IMR-90 (cell line): ENCODE measurements at regions of chr4 and their contacts with region 1.

Region 1: GRCh38 chr4:157045507-157046127 is 30.3 kb upstream of the GLRB start:
- DNase-seq: peak; percentile 80
- ATAC-seq: peak; percentile 96
- H3K4me3 ChIP-seq: no peak overlapping the region
- H3K27ac ChIP-seq: no peak overlapping the region
- H3K4me1 ChIP-seq: 0 out of 2 replicates have a peak, but pooled peaks cover 3% of the 10 kb centered on the region
- H3K27me3 ChIP-seq: no peaks in the 10 kb centered on the region
- CTCF ChIP-seq: peak; percentile 90
- POLR2A ChIP-seq: no peak
- RAD21 ChIP-seq: peak; percentile 94

Region 2: DNA sequence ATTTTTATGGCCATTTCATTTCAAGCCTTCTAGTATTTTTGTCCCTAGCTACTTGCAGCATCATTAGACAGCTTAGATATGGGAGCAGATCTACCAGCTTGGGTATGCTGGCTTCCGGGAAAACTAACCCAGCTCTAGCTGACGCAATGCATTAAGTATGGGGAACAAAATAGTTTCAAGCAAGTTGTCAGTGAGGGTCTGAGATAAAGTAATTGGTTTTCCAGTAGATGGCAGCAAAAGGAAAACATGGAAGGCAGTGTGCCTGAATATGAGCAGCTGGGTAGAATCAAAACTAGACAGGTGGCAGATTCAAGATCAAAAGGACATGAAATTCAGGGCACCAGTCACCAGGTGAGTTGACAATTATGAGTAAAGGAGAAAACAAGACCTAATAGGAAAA is 751.0 kb before region 1 on chr4:
- CTCF ChIA-PET with region 1: no interaction called
- POLR2A ChIA-PET with region 1: no interaction called
- dilution Hi-C with region 1: no loop called
- in situ Hi-C with region 1: no loop called
- intact Hi-C with region 1: loop called (anchors 10 kb)
- DNase-seq: peak; percentile 87
- ATAC-seq: peak; percentile 70
- H3K4me3 ChIP-seq: no peak overlapping the region
- H3K27ac ChIP-seq: no peak overlapping the region
- H3K4me1 ChIP-seq: peaks cover 4% of the 10 kb centered on the region; the same call in 1 of the 2 replicates
- H3K27me3 ChIP-seq: no peaks in the 10 kb centered on the region
- CTCF ChIP-seq: peak; percentile 63
- POLR2A ChIP-seq: no peak
- RAD21 ChIP-seq: peak; percentile 63

Region 3: GRCh38 chr4:156594624-156595023 is 451.0 kb before region 1 on chr4:
- CTCF ChIA-PET with region 1: no interaction called
- POLR2A ChIA-PET with region 1: no interaction called
- dilution Hi-C with region 1: no loop called
- in situ Hi-C with region 1: no loop called
- intact Hi-C with region 1: loop called (anchors 2 kb)
- DNase-seq: no peak
- ATAC-seq: no peak
- H3K4me3 ChIP-seq: no peak overlapping the region
- H3K27ac ChIP-seq: no peak overlapping the region
- H3K4me1 ChIP-seq: peaks cover 3% of the 10 kb centered on the region; the same call in 1 of the 2 replicates
- H3K27me3 ChIP-seq: no peaks in the 10 kb centered on the region
- CTCF ChIP-seq: no peak
- POLR2A ChIP-seq: no peak
- RAD21 ChIP-seq: no peak

Region 4: DNA sequence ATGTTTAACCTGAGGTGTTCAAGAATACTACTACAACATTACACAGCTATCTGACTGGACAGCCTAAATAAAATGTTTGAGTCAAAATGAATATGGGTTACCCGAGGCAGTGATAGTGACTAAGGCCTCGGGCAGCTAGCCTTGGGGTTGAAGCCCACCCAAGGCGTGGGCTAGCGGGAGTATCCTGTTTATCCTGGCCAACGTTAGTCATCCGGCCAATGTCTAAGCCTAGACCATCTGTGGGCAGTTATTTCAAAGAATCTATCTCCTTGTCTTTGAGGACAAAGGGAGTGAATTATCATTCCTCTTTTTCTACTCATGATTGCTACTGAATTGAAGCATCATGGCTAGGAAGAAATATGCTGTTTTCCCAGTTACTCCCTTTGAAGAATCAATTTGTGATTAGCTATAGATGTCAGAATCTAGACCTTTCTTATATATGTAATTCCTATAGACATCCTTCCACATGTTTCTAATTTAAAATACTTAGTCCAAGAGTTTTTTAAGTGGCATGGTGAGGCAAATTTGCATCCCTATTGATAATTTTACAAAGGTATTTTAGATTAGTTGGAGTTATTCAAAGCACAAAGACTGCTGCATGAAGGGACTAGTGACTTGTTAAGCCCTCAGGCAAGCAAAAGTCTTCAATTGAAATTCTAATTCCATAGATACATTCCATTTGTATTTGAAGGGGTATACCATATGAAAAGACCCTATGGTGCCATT is 68.0 kb before region 1 on chr4:
- CTCF ChIA-PET with region 1: interaction called, 11 read pairs
- POLR2A ChIA-PET with region 1: no interaction called
- dilution Hi-C with region 1: no loop called
- in situ Hi-C with region 1: loop called (anchors 5 kb)
- intact Hi-C with region 1: no loop called
- DNase-seq: peak; percentile 97
- ATAC-seq: peak; percentile 81
- H3K4me3 ChIP-seq: no peak overlapping the region
- H3K27ac ChIP-seq: no peak overlapping the region
- H3K4me1 ChIP-seq: peaks cover 11% of the 10 kb centered on the region; the same call in 1 of the 2 replicates
- H3K27me3 ChIP-seq: no peaks in the 10 kb centered on the region
- CTCF ChIP-seq: no peak
- POLR2A ChIP-seq: no peak
- RAD21 ChIP-seq: no peak

Region 5: DNA sequence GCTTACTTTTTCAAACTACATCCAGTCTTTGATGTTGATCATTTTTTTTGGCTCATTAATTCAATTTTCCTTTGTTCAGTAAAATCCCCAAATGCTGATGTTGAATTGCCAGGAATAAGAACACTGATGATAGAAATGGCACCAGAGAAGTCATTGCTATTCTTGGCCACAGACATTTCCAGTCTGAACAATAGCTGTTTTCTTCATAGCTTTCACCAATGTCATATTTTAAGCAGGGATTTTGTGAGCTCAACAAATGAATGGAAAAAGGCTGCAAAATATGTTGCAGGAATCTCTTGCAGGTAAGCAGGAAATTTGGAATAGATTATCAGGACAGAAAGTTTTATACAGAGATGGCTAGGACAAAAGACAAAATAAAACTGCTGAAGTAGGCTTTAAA is 10.1 kb before region 1 on chr4:
- CTCF ChIA-PET with region 1: interaction called, 10 read pairs
- POLR2A ChIA-PET with region 1: interaction called, 17 read pairs
- dilution Hi-C with region 1: no loop called
- in situ Hi-C with region 1: no loop called
- intact Hi-C with region 1: no loop called
- DNase-seq: no peak
- ATAC-seq: no peak
- H3K4me3 ChIP-seq: no peak overlapping the region
- H3K27ac ChIP-seq: no peak overlapping the region
- H3K4me1 ChIP-seq: no peaks in the 10 kb centered on the region
- H3K27me3 ChIP-seq: no peaks in the 10 kb centered on the region
- CTCF ChIP-seq: no peak
- POLR2A ChIP-seq: no peak
- RAD21 ChIP-seq: no peak

Region 6: DNA sequence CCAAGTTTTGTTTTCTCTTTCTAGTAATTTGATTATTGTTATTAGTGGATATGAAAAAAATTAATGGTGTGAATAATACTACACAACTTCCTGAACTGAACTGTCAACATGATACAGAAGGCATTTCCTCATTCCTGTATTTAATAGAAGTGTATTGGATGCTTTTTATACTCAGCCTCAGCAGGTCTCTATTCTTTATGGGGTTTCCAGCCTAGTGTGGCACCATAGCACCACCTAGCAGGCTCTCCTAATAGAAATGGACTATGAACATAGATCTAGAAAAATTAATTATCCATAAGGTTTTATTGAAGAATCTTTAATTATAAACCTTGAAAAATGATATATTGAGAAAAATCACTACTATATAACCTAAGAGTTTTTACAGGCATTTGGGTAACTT is 82.8 kb after region 1 on chr4:
- CTCF ChIA-PET with region 1: interaction called, 4 read pairs
- POLR2A ChIA-PET with region 1: no interaction called
- dilution Hi-C with region 1: no loop called
- in situ Hi-C with region 1: no loop called
- intact Hi-C with region 1: loop called (anchors 2 kb)
- DNase-seq: peak; percentile 52
- ATAC-seq: peak; percentile 88
- H3K4me3 ChIP-seq: no peak overlapping the region
- H3K27ac ChIP-seq: no peak overlapping the region
- H3K4me1 ChIP-seq: no peaks in the 10 kb centered on the region
- H3K27me3 ChIP-seq: no peaks in the 10 kb centered on the region
- CTCF ChIP-seq: peak; percentile 67
- POLR2A ChIP-seq: no peak
- RAD21 ChIP-seq: peak; percentile 74

Region 7: DNA sequence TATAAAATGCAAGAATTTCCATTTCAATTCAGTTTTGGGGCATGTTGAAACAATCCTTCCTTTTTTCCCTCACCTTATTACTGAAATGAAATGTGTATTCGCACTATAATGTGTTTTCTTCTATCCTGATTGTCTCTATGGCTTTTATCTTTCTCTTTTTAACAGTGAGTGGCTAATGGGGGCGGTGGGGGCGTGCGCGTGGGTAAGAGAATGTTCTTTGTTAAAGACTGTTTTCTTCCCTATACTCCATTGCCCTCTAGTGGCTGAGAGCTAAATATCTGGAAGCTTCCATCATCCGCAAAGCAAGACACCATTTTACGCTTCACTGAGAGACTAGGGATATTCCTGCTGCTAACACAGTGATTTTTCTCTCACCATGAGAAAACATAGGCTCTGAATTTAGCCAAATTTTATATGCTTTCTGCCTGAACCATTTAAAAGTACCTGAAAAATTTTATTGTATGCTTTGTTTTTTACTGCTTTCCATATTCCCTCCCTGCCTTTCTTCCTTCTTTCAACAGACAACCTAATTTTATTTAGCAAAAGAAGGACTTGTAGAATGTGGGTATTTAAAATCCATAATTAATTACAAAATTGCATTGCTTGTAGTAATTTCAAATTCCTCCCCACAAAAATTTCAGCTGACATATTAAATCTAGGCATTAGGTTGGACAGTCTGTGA is 933.2 kb after region 1 on chr4:
- CTCF ChIA-PET with region 1: no interaction called
- POLR2A ChIA-PET with region 1: no interaction called
- dilution Hi-C with region 1: no loop called
- in situ Hi-C with region 1: no loop called
- intact Hi-C with region 1: loop called (anchors 10 kb)
- DNase-seq: peak; percentile 64
- ATAC-seq: peak; percentile 95
- H3K4me3 ChIP-seq: no peak overlapping the region; the same call in 1 of the 2 replicates
- H3K27ac ChIP-seq: no peak overlapping the region
- H3K4me1 ChIP-seq: no peaks in the 10 kb centered on the region
- H3K27me3 ChIP-seq: no peaks in the 10 kb centered on the region; the same call in 1 of the 2 replicates
- CTCF ChIP-seq: peak; percentile 78
- POLR2A ChIP-seq: no peak
- RAD21 ChIP-seq: peak; percentile 81